ENCODE measurements at regions of chr2 and their contacts with region 1.

Region 1: DNA sequence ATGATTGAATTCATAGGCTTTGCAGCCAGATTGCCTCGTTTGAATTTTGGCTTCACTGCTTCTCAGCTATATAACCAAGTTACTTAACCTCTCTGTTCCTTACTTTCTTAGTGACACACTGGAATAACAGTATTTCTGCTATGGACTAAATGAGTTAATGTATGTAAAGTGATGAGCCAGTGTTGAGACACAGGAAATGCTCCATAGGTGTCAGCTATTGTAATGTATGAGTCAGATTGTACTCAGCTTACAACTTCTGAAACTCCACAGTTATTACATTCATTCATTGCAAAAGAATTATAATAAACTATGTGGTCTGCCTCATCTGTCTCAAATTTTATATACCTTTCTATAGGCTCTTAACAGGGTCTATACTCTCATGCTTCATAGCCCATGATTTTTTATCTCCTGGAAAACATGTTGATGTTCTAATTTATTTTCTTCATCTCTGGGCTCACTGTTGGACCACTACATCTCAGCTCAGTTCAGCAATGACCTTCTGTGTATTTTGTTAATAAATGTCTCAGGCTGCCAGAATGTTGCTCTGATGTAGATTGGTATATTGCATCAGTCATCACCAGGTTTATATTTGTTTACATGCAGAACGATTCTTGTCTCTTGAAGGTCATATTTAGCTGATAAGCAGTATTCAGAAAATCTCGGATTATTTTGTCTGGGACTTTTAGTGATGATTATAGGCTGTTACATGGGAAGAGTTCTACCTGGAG is 76.2 kb downstream of the MAP3K20 start:
- DNase-seq: peak in 1 of 9 experiments; percentile 21
- ATAC-seq: no peak
- H3K4me3 ChIP-seq: no peak overlapping the region
- H3K4me3 Mint-ChIP-seq: no peak overlapping the region
- H3K27ac ChIP-seq: no peak overlapping the region
- H3K27ac Mint-ChIP-seq: no peak overlapping the region
- H3K4me1 ChIP-seq: no peaks in the 10 kb centered on the region
- H3K4me1 Mint-ChIP-seq: peaks cover 8% of the 10 kb centered on the region
- H3K27me3 ChIP-seq: no peaks in the 10 kb centered on the region
- H3K27me3 Mint-ChIP-seq: no peaks in the 10 kb centered on the region
- CTCF ChIP-seq: no peak

Region 2: DNA sequence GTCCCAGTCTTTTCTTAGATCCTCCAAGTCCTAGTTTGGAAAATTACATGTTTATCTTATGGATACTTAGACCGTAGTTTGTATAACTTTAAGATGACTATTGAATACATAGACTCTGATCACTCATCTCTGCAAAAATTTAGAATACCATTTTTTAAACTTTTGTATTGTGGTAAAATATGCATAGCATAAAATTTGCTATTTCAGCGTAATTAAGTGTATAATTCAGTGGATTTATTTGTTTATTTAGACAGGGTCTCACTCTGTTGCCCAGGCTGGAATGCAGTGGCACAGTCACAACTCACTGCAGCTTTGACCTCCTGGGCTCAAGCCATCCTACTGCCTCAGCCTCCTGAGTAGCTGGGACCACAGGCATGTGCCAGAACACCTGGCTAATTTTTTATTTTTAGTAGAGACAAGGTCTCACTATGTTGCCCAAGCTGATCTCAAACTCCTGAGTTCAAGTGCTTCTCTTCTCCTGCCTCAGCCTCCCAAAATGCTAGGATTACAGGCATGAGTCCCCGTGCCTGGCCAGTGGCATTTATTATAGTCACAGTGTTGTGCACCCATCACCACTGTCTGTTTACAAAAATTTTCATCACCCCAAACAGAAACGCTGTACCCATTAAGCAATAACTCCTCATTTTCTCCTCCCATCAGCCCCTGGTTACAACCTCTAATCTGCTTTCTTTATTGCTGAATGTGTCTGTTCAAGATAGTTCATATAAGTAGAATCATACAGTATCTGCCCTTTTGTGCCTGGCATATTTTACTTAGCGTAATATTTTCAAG is 13.8 kb after region 1 on chr2:
- CTCF ChIA-PET with region 1: no interaction called
- POLR2A ChIA-PET with region 1: no interaction called
- intact Hi-C with region 1: loop called in 1 of 2 experiments (anchors 2 kb)
- DNase-seq: no peak
- ATAC-seq: no peak
- H3K4me3 ChIP-seq: no peak overlapping the region
- H3K4me3 Mint-ChIP-seq: no peak overlapping the region
- H3K27ac ChIP-seq: no peak overlapping the region
- H3K27ac Mint-ChIP-seq: no peak overlapping the region
- H3K4me1 ChIP-seq: no peaks in the 10 kb centered on the region
- H3K4me1 Mint-ChIP-seq: no peaks in the 10 kb centered on the region
- H3K27me3 ChIP-seq: no peaks in the 10 kb centered on the region
- H3K27me3 Mint-ChIP-seq: peaks cover 4% of the 10 kb centered on the region
- CTCF ChIP-seq: no peak

Region 3: GRCh38 chr2:173298536-173299097 is 146.8 kb after region 1 on chr2:
- CTCF ChIA-PET with region 1: no interaction called
- POLR2A ChIA-PET with region 1: no interaction called
- intact Hi-C with region 1: no loop called
- DNase-seq: no peak
- ATAC-seq: no peak
- H3K4me3 ChIP-seq: no peak overlapping the region
- H3K4me3 Mint-ChIP-seq: no peak overlapping the region
- H3K27ac ChIP-seq: no peak overlapping the region
- H3K27ac Mint-ChIP-seq: no peak overlapping the region
- H3K4me1 ChIP-seq: no peaks in the 10 kb centered on the region
- H3K4me1 Mint-ChIP-seq: no peaks in the 10 kb centered on the region
- H3K27me3 ChIP-seq: no peaks in the 10 kb centered on the region
- H3K27me3 Mint-ChIP-seq: peaks cover 3% of the 10 kb centered on the region
- CTCF ChIP-seq: no peak

Measured in CD8-positive, alpha-beta T cell (primary cell).